Cardiac septum (tissue), 1 donor: ENCODE measurements at regions of chr7 and their contacts with region 1.

Region 1: DNA sequence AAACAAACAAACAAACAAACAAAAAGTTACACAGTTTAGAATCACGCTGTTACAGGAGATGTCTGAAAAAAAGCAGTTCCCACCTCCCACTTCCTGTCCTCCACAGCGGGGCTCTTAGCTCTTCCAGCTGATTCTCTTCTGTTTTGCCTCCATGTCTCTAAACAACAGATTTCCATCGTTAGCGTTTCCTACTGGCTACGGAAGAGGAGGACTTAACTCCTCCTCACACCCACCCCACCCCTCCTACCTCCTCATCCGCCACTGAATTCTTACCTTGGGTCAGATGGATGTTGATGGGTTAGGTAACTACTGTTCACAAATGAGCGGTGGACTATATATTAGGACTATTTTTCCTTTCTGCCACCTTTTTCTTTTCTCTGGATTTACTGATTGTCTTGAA is 36.8 kb upstream of the NUB1 start:
- DNase-seq: no peak

Region 2: GRCh38 chr7:151123822-151124464 is 180.9 kb before region 1 on chr7:
- intact Hi-C with region 1: loop called (anchors 2 kb)
- DNase-seq: peak; percentile 92

Region 3: GRCh38 chr7:151244196-151244840 is 60.5 kb before region 1 on chr7:
- intact Hi-C with region 1: loop called (anchors 2 kb)
- DNase-seq: no peak

Region 4: DNA sequence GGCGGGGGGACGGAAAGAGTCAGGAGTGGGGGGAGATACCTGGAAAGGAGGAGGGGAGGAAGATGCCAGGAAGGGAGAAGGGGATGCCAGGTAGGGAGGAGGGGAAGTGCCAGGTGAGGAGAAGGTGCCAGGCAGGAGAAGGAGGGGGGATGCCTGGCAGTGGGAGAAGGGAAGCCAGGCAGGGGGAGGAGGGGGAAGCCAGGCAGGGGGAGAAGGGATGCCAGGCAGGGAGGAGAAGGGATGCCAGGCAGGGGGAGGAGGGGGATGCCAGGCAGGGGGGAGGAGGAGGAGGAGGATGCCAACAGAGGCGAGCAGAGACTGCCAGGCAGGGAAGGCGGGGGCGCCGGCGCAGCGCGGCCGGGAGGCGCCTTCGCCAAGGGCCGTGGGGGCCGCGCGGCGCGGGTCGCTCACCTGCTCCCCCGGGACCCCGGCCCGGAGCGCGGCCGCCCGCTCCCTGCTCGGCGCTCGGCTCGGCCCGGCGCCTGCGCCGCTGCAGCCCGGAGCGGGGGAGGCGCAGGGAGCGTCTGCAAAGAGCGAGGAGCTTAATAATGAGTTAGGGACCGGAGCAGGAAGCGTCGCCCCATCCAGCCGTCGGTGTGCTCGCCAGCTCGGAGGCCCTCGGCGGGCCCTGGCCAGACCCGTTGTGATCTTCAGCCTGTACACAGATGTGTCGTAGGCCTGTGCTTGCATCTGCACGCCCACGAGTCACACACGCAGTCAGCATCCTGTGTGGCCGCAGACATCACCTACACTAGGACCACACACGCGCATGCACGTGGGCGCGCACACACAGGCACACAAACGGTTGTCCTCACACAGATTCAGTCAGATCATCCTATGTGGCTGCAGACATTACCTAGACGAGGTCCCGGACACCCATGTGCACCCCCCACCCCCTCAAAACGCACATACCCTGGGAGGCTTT is 27.9 kb before region 1 on chr7:
- intact Hi-C with region 1: no loop called
- DNase-seq: no peak

Region 5: DNA sequence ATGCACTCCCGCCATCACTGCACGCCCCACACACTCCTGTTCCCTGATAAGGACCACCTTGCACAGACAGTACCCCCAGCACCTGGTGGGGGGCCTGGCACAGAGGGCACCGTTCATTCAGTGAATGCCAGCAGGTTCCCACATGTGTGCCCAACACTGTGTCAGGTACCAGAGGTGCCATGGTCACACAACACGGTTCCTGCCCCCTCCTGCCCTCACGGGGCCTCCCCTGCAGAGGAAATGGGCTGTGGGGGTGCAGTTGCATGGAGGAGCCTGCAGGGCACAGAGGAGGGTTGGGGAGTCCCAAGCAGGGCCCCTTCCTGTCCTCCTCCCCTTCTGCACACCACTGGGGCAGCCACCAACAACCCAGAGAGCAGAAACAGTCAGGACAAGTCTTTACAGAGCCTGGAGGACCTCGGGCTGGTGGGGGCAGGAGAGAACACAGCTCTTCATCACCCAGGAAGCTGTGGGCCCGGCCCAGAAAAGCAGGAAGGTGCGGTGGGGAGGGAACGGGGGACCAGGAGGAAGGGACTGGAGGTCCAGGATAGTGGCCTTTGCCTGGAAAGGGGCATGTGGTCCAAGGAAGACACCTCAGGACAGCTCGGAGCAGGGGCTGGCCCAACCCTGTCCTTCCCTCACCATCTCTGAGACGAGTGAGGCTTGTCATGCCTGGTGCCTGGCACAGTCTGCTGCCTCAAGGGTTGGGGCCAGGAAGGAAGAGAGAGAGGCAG is 128.1 kb after region 1 on chr7:
- intact Hi-C with region 1: no loop called
- DNase-seq: no peak